AG04449 (cell line): ENCODE measurements at regions of chr10 and their contacts with region 1.

Region 1: GRCh38 chr10:109966961-109967738 is 40.6 kb upstream of the ADD3 start:
- DNase-seq: no peak
- H3K4me3 ChIP-seq: peak overlapping the region; percentile 7; the same call in 1 of the 2 replicates
- CTCF ChIP-seq: no peak

Region 2: DNA sequence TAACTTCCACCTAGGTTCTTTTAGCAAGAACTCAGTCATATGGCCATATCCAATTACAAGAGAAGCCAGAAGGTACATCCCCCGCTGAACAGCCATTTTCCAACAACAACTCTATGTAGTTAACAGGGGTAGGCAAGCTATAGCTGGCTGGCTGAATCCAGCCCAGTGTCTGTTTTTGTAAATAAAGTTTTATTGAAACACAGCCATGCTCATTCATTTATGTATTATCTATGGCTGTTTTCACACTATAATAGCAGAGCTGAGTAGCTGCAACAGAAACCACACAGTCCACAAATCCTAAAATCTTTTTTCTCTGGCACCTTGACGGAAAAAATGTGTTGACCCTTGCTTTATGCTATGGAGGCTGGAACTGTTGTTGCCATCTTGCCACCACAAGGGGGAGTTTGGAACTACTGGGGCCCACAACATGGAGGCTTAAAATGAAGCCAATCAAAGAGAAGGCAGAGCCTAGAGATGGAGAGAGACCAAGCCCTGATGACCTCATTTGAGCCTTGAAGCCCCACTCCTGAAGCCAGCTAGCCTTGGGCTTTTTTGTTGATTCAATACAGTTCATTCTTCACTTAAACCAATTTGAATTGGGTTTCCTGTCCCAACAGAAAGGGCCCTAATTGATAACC is 10.6 kb before region 1 on chr10:
- CTCF ChIA-PET with region 1: interaction called, 11 read pairs
- POLR2A ChIA-PET with region 1: no interaction called
- DNase-seq: no peak
- H3K4me3 ChIP-seq: no peak overlapping the region
- CTCF ChIP-seq: peak; percentile 47

Region 3: GRCh38 chr10:109978481-109978880 is 11.3 kb after region 1 on chr10:
- CTCF ChIA-PET with region 1: interaction called, 85 read pairs
- POLR2A ChIA-PET with region 1: interaction called, 3 read pairs
- DNase-seq: no peak
- H3K4me3 ChIP-seq: no peak overlapping the region
- CTCF ChIP-seq: peak; percentile 60